ENCODE measurements at regions of chr10 and their contacts with region 1.

Region 1: GRCh38 chr10:118720685-118721538 is 33.9 kb downstream of the CACUL1 start:
- DNase-seq: peak in 1 of 2 donors; percentile 67
- H3K4me3 ChIP-seq: no peak overlapping the region
- H3K27ac ChIP-seq: no peak overlapping the region
- H3K4me1 ChIP-seq: peaks cover 0 to 21% (median 13%) of the 10 kb centered on the region in 4 donors
- H3K27me3 ChIP-seq: no peaks in the 10 kb centered on the region
- CTCF ChIP-seq: peak; percentile 77 to 79

Region 2: GRCh38 chr10:118459726-118460193 is 261.2 kb before region 1 on chr10:
- intact Hi-C with region 1: no loop called
- DNase-seq: peak; percentile 61 to 68
- H3K4me3 ChIP-seq: no peak overlapping the region
- H3K27ac ChIP-seq: no peak overlapping the region
- H3K4me1 ChIP-seq: no peaks in the 10 kb centered on the region
- H3K27me3 ChIP-seq: peaks cover 0 to 14% of the 10 kb centered on the region in 2 donors
- CTCF ChIP-seq: peak; percentile 53 to 66

Region 3: GRCh38 chr10:118568327-118568848 is 152.5 kb before region 1 on chr10:
- intact Hi-C with region 1: loop called (anchors 2 kb)
- DNase-seq: no peak
- H3K4me3 ChIP-seq: no peak overlapping the region
- H3K27ac ChIP-seq: no peak overlapping the region
- H3K4me1 ChIP-seq: peaks cover 0 to 19% (median 9%) of the 10 kb centered on the region in 4 donors
- H3K27me3 ChIP-seq: peaks cover 0 to 4% of the 10 kb centered on the region in 2 donors
- CTCF ChIP-seq: peak; percentile 79 to 83

Measured in tibial artery (tissue), 4 donors.